ENCODE measurements at regions of chr15 and their contacts with region 1.

Region 1: GRCh38 chr15:69679623-69680228 is 227.1 kb downstream of the RPLP1 start:
- DNase-seq: peak; percentile 86
- H3K4me3 Mint-ChIP-seq: peak overlapping the region; percentile 34
- H3K27ac Mint-ChIP-seq: peak overlapping the region; percentile 28
- H3K4me1 Mint-ChIP-seq: peaks cover 23% of the 10 kb centered on the region
- H3K27me3 Mint-ChIP-seq: peaks cover 9% of the 10 kb centered on the region

Region 2: GRCh38 chr15:69568173-69569020 is 111.3 kb before region 1 on chr15:
- CTCF ChIA-PET with region 1: no interaction called
- POLR2A ChIA-PET with region 1: no interaction called
- intact Hi-C with region 1: no loop called
- DNase-seq: no peak
- H3K4me3 Mint-ChIP-seq: no peak overlapping the region
- H3K27ac Mint-ChIP-seq: no peak overlapping the region
- H3K4me1 Mint-ChIP-seq: peaks cover 2% of the 10 kb centered on the region
- H3K27me3 Mint-ChIP-seq: no peaks in the 10 kb centered on the region

Region 3: GRCh38 chr15:69583626-69584025 is 96.1 kb before region 1 on chr15:
- CTCF ChIA-PET with region 1: no interaction called
- POLR2A ChIA-PET with region 1: no interaction called
- intact Hi-C with region 1: no loop called
- DNase-seq: no peak
- H3K4me3 Mint-ChIP-seq: no peak overlapping the region
- H3K27ac Mint-ChIP-seq: no peak overlapping the region
- H3K4me1 Mint-ChIP-seq: peaks cover 5% of the 10 kb centered on the region
- H3K27me3 Mint-ChIP-seq: no peaks in the 10 kb centered on the region

Region 4: GRCh38 chr15:69668963-69669362 is 10.8 kb before region 1 on chr15:
- CTCF ChIA-PET with region 1: no interaction called
- POLR2A ChIA-PET with region 1: interaction called, 4 read pairs
- intact Hi-C with region 1: loop called (anchors 1 kb)
- DNase-seq: peak; percentile 47
- H3K4me3 Mint-ChIP-seq: no peak overlapping the region
- H3K27ac Mint-ChIP-seq: no peak overlapping the region
- H3K4me1 Mint-ChIP-seq: peaks cover 26% of the 10 kb centered on the region
- H3K27me3 Mint-ChIP-seq: no peaks in the 10 kb centered on the region

Region 5: GRCh38 chr15:69719527-69720240 is 40.0 kb after region 1 on chr15:
- CTCF ChIA-PET with region 1: interaction called, 3 read pairs
- POLR2A ChIA-PET with region 1: interaction called, 5 read pairs
- intact Hi-C with region 1: loop called (anchors 1 kb)
- DNase-seq: peak; percentile 83
- H3K4me3 Mint-ChIP-seq: no peak overlapping the region
- H3K27ac Mint-ChIP-seq: peak overlapping the region; percentile 87
- H3K4me1 Mint-ChIP-seq: peaks cover 84% of the 10 kb centered on the region
- H3K27me3 Mint-ChIP-seq: peaks cover 3% of the 10 kb centered on the region

Measured in activated CD4-positive, alpha-beta memory T cell treated with anti-CD3 and anti-CD28 coated beads for 36 hours (primary cell).